Heart left ventricle (tissue), 16 donors: ENCODE measurements at regions of chr9 and their contacts with region 1.

Region 1: DNA sequence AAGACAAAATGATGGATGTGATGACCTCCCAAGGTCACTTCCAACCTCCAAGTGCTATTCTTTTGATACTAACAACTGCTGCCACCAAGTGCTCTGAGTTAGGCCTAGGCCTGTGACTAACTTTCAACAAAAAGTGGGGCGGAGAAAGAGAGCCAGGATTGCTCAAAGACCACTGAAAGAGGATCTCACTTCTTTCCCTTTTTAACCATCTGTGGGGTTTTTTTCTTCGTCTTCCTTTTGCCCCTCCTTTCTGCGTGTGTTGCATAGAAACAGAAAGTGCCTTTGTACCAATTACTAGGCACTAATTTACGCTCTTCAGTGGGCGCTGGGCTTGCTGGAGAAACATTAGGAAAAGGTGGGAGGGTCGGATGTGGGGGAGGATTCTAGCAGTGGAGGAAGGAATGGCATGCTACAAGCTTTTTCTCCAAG is 8.0 kb downstream of the KLF9 start:
- DNase-seq: no peak
- ATAC-seq: peak in 1 of 4 donors; percentile 21
- H3K4me3 ChIP-seq: peak overlapping the region in 6 of 12 donors; percentile 8 to 35 (median 17)
- H3K27ac ChIP-seq: peak overlapping the region; percentile 45 to 86 (median 71)
- H3K4me1 ChIP-seq: peaks cover 21 to 96% (median 88%) of the 10 kb centered on the region in 12 donors
- H3K27me3 ChIP-seq: no peaks in the 10 kb centered on the region
- CTCF ChIP-seq: no peak
- POLR2A ChIP-seq: no peak

Region 2: DNA sequence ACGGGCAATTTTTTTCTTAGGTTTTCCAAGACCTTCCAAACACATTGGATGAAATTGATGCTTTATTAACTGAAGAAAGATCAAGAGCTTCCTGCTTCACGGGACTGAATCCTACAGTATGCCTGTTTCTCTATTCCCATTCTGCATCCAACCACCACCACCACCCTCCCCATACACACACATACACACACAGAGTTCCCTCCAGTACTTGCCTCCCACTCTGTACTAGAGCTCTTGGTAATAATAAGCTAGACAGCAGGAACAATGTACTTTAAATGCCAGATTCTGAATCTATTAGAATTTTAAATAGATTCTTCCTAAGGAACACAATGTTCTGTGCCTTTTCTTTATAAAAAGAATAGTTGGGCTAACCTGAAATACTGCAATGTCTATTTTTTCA is 59.4 kb before region 1 on chr9:
- intact Hi-C with region 1: loop called in 5 of 10 experiments (anchors 5 kb)
- DNase-seq: no peak
- ATAC-seq: no peak
- H3K4me3 ChIP-seq: no peak overlapping the region
- H3K27ac ChIP-seq: no peak overlapping the region
- H3K4me1 ChIP-seq: peaks cover 0 to 12% (median 0%) of the 10 kb centered on the region in 12 donors
- H3K27me3 ChIP-seq: no peaks in the 10 kb centered on the region
- CTCF ChIP-seq: no peak
- POLR2A ChIP-seq: no peak

Region 3: GRCh38 chr9:70534061-70534460 is 127.6 kb after region 1 on chr9:
- intact Hi-C with region 1: no loop called
- DNase-seq: no peak
- ATAC-seq: no peak
- H3K4me3 ChIP-seq: no peak overlapping the region
- H3K27ac ChIP-seq: no peak overlapping the region
- H3K4me1 ChIP-seq: peaks cover 0 to 5% (median 0%) of the 10 kb centered on the region in 12 donors
- H3K27me3 ChIP-seq: no peaks in the 10 kb centered on the region
- CTCF ChIP-seq: no peak
- POLR2A ChIP-seq: no peak